HepG2 (cell line): ENCODE measurements at regions of chr6 and their contacts with region 1.

Region 1: DNA sequence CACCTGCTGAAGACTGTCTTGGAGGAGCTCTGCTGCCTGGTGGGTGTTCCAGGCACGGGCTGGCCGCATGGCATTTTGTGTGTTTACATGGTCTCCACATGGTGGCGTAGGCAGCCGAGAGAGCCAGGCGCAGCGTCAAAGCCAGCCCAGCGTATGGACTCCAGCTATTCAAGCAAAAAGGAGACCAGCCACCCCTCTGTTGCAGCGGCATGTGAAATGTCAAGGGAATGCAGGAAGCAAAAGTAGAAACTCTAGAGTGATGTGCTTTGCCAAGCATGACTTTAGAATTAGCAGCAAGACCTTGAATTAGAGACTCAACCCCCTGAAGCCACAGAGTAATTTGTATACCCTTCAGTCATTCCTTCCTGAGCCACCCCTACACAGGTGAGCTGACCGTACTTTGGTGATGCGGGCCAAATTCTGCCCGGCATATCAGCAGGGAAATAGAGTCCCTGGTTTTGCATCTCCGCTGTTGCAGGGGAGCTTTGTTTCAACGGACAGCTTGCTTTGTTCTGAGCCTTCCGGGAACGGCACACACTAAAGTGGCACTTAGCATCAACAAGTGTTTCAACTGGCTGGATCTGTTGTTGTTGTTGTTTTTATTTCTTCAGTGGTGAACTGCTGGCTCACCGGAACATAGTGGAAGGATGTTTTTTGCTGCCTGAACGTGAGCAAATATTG is 48.5 kb downstream of the FNDC1 start:
- DNase-seq: peak; percentile 29
- ATAC-seq: peak; percentile 95
- H3K4me3 ChIP-seq: no peak overlapping the region
- H3K27ac ChIP-seq: no peak overlapping the region
- H3K4me1 ChIP-seq: no peaks in the 10 kb centered on the region
- H3K27me3 ChIP-seq: peaks cover 9 to 46% of the 10 kb centered on the region in 2 experiments
- CTCF ChIP-seq: peak; percentile 79
- EP300 ChIP-seq: no peak
- POLR2A ChIP-seq: no peak
- RAD21 ChIP-seq: peak; percentile 76

Region 2: DNA sequence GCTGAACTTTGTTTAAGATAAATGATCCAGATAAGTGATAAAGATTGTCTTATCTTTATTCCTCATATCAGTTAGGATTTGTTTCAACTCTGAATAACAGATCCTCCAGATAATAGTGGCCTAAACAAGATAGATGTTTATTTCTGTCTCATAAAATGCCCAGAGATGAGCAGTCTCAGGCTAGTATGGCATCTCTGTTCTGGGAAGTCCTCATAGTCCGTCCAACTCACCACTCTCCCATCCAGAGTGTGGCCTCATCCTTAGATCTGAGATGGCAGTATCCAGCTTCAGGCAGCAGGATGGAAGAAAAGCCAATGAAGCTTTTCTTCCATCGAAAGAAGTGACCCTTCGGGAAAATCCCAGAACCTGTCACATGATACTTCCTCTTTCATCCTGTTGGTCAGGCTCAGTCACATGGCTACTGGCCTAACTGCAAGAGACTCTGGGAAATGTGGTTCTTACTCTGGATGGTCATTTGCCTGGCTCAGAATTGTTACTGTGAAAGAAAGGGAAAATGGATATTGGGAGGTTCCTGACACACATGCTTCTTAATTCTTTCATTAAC is 143.5 kb before region 1 on chr6:
- CTCF ChIA-PET with region 1: no interaction called
- POLR2A ChIA-PET with region 1: no interaction called
- in situ Hi-C with region 1: no loop called
- intact Hi-C with region 1: no loop called
- DNase-seq: no peak
- ATAC-seq: peak; percentile 47; the same call in 2 of the 3 replicates
- H3K4me3 ChIP-seq: no peak overlapping the region
- H3K27ac ChIP-seq: no peak overlapping the region
- H3K4me1 ChIP-seq: peaks cover 8% of the 10 kb centered on the region; the same call in 1 of the 2 replicates
- H3K27me3 ChIP-seq: peaks cover 1 to 43% of the 10 kb centered on the region in 2 experiments; a peak in 4 of 5 replicates
- CTCF ChIP-seq: no peak
- EP300 ChIP-seq: no peak
- POLR2A ChIP-seq: no peak
- RAD21 ChIP-seq: no peak

Region 3: GRCh38 chr6:159608961-159609651 is 391.4 kb after region 1 on chr6:
- CTCF ChIA-PET with region 1: interaction called, 5 read pairs
- POLR2A ChIA-PET with region 1: no interaction called
- in situ Hi-C with region 1: loop called (anchors 25 kb)
- intact Hi-C with region 1: no loop called
- DNase-seq: peak; percentile 47
- ATAC-seq: peak; percentile 94
- H3K4me3 ChIP-seq: no peak overlapping the region
- H3K27ac ChIP-seq: no peak overlapping the region
- H3K4me1 ChIP-seq: no peaks in the 10 kb centered on the region
- H3K27me3 ChIP-seq: 0 out of 5 replicates have a peak, but pooled peaks cover 0 to 7% of the 10 kb centered on the region in 2 experiments
- CTCF ChIP-seq: peak; percentile 82
- EP300 ChIP-seq: no peak
- POLR2A ChIP-seq: no peak
- RAD21 ChIP-seq: peak; percentile 52

Region 4: GRCh38 chr6:159806021-159806458 is 588.3 kb after region 1 on chr6:
- CTCF ChIA-PET with region 1: no interaction called
- POLR2A ChIA-PET with region 1: no interaction called
- in situ Hi-C with region 1: no loop called
- intact Hi-C with region 1: no loop called
- DNase-seq: peak; percentile 75
- ATAC-seq: peak; percentile 72
- H3K4me3 ChIP-seq: 0 out of 6 replicates have a peak overlapping the region, but pooled peaks of 1 of the 3 experiments have one; percentile 17
- H3K27ac ChIP-seq: no peak overlapping the region
- H3K4me1 ChIP-seq: peaks cover 32% of the 10 kb centered on the region
- H3K27me3 ChIP-seq: 0 out of 5 replicates have a peak, but pooled peaks cover 0 to 4% of the 10 kb centered on the region in 2 experiments
- CTCF ChIP-seq: no peak
- EP300 ChIP-seq: peak in 1 of 2 experiments; percentile 58; a peak in 1 of 4 replicates
- POLR2A ChIP-seq: no peak
- RAD21 ChIP-seq: no peak